Gastrocnemius medialis (tissue), 4 donors: ENCODE measurements at regions of chr1 and their contacts with region 1.

Region 1: GRCh38 chr1:156689035-156689952 is 12.1 kb upstream of the NES start:
- DNase-seq: peak; percentile 38 to 72
- ATAC-seq: peak; percentile 83 to 88
- H3K4me3 ChIP-seq: peak overlapping the region; percentile 20 to 36 (median 32)
- H3K27ac ChIP-seq: peak overlapping the region in 3 of 4 donors; percentile 29 to 64 (median 64)
- H3K4me1 ChIP-seq: peaks cover 9 to 13% of the 10 kb centered on the region in 2 donors
- H3K27me3 ChIP-seq: peaks cover 0 to 2% (median 0%) of the 10 kb centered on the region in 3 donors
- CTCF ChIP-seq: peak; percentile 92 to 95 (median 93)
- POLR2A ChIP-seq: no peak

Region 2: GRCh38 chr1:156435545-156436141 is 253.7 kb before region 1 on chr1:
- in situ Hi-C with region 1: no loop called
- intact Hi-C with region 1: no loop called
- DNase-seq: no peak
- ATAC-seq: no peak
- H3K4me3 ChIP-seq: peak overlapping the region; percentile 18 to 57 (median 43)
- H3K27ac ChIP-seq: no peak overlapping the region
- H3K4me1 ChIP-seq: peaks cover 10 to 16% of the 10 kb centered on the region in 2 donors
- H3K27me3 ChIP-seq: peaks cover 89 to 99% (median 97%) of the 10 kb centered on the region in 3 donors
- CTCF ChIP-seq: no peak
- POLR2A ChIP-seq: no peak

Region 3: DNA sequence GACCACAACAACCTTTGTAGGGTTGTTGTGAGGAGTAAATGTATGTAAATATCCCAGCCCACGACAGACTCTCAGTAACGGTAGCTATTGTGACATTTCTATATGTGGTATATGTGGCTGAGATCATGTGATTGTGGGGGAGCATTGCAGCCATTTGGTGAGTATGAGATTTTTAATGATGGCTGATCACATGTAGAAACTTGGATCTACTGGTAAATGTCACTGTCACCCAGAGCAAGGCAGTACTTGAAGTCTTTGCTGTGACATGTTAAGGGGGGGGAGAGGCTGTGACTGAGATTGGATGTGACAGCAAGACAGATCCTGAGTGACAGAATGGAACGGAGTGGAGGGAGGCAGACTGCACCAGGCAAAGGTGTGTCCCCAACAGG is 164.8 kb before region 1 on chr1:
- in situ Hi-C with region 1: no loop called
- intact Hi-C with region 1: no loop called
- DNase-seq: peak in 1 of 2 donors; percentile 7
- ATAC-seq: no peak
- H3K4me3 ChIP-seq: no peak overlapping the region
- H3K27ac ChIP-seq: no peak overlapping the region
- H3K4me1 ChIP-seq: no peaks in the 10 kb centered on the region
- H3K27me3 ChIP-seq: no peaks in the 10 kb centered on the region
- CTCF ChIP-seq: no peak
- POLR2A ChIP-seq: peak in 1 of 2 donors; percentile 6

Region 4: GRCh38 chr1:156705918-156706656 is 16.8 kb after region 1 on chr1:
- in situ Hi-C with region 1: no loop called
- intact Hi-C with region 1: loop called (anchors 1 kb)
- DNase-seq: peak in 1 of 2 donors; percentile 36
- ATAC-seq: peak; percentile 33 to 49
- H3K4me3 ChIP-seq: peak overlapping the region; percentile 37 to 69 (median 50)
- H3K27ac ChIP-seq: peak overlapping the region; percentile 60 to 69 (median 65)
- H3K4me1 ChIP-seq: peaks cover 28% of the 10 kb centered on the region in 2 donors
- H3K27me3 ChIP-seq: peaks cover 38 to 43% (median 40%) of the 10 kb centered on the region in 3 donors
- CTCF ChIP-seq: peak; percentile 66 to 90 (median 87)
- POLR2A ChIP-seq: no peak

Region 5: GRCh38 chr1:156740679-156741612 is 51.7 kb after region 1 on chr1 and contains the start of gene MRPL24:
- in situ Hi-C with region 1: no loop called
- intact Hi-C with region 1: no loop called
- DNase-seq: peak; percentile 99
- ATAC-seq: peak; percentile 97 to 98
- H3K4me3 ChIP-seq: peak within 1 kb of the TSS; percentile 73 to 94 (median 76)
- H3K27ac ChIP-seq: peak within 1 kb of the TSS; percentile 87 to 99 (median 92)
- H3K4me1 ChIP-seq: peaks cover 27 to 29% of the 10 kb centered on the region in 2 donors
- H3K27me3 ChIP-seq: no peaks in the 10 kb centered on the region
- CTCF ChIP-seq: peak in 1 of 5 experiments; percentile 8
- POLR2A ChIP-seq: peak; percentile 14 to 36
- total RNA-seq, gene MRPL24: 54.9 to 121 (median 102) TPM